Natural killer cell (primary cell): ENCODE measurements at regions of chr10 and their contacts with region 1.

Region 1: DNA sequence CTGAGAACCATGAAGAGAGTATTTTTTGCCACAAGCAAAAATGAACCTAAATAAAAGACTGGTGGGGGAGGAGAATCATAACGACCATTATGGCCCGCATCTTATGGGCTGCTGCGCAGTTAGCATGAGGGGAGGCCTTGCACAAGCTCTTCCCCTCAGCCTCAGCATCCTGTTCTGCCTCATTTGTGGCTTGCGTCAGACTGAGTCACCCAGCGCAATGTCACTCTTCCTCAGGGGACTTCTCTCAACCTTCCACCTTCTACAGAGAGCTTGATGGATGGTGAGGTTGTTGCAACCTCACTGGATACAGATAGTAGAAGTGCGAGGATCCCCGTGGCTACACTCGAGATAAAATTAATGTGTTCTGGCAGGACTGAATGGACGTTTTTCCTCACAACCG is 16.8 kb upstream of the GPR15LG start:
- DNase-seq: peak; percentile 40 to 65
- ATAC-seq: peak; percentile 89 to 98 (median 97)
- H3K4me3 ChIP-seq: no peak overlapping the region
- H3K4me3 Mint-ChIP-seq: no peak overlapping the region
- H3K27ac ChIP-seq: no peak overlapping the region
- H3K27ac Mint-ChIP-seq: peak overlapping the region; percentile 72 to 83
- H3K4me1 ChIP-seq: no peaks in the 10 kb centered on the region
- H3K4me1 Mint-ChIP-seq: peaks cover 9 to 16% of the 10 kb centered on the region in 2 donors
- H3K27me3 ChIP-seq: no peaks in the 10 kb centered on the region
- H3K27me3 Mint-ChIP-seq: no peaks in the 10 kb centered on the region
- CTCF ChIP-seq: no peak

Region 2: DNA sequence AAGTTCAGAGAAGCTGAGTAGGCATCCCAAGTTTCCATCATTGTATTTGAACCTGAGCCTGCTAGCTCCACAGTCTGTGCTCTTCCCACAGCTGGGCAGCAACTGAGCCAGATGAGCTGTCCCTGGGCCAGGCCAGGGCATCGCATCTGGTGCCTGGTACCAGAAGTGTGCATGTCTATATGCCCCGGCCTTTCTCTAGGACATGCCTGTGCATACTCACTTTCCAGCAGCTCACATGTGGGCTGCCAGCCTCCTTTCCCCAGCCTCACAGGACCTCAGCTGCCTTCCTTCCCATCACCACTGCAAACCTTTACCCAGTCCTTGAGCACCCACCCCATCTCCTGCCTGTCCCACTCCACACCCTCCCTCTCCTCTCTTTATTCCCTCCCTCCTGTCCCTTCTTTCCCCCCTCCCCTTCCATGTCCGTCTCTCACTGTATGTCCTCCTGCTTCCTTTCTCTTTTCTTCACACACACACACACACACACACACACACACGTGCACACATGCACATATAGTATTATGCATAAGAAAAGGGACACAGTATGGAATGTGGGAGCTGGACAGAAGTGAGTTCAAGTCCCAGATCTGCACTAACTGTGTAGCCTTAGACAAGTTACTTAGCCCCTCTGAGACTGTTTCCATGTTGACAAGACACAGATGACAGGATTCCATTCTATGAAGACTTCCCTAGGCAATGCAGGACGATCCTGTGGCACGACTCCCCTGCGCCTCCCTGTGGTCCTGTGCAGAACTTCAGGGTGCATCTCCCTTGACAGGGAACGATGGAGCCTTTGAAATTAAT is 48.5 kb after region 1 on chr10:
- intact Hi-C with region 1: loop called (anchors 2 kb)
- DNase-seq: peak; percentile 67 to 83
- ATAC-seq: peak; percentile 81 to 99 (median 96)
- H3K4me3 ChIP-seq: no peak overlapping the region
- H3K4me3 Mint-ChIP-seq: no peak overlapping the region
- H3K27ac ChIP-seq: no peak overlapping the region
- H3K27ac Mint-ChIP-seq: no peak overlapping the region
- H3K4me1 ChIP-seq: no peaks in the 10 kb centered on the region
- H3K4me1 Mint-ChIP-seq: peaks cover 0 to 12% of the 10 kb centered on the region in 2 donors
- H3K27me3 ChIP-seq: no peaks in the 10 kb centered on the region
- H3K27me3 Mint-ChIP-seq: no peaks in the 10 kb centered on the region
- CTCF ChIP-seq: peak; percentile 90